RWPE1 (cell line): ENCODE measurements at regions of chr1 and their contacts with region 1.

Region 1: GRCh38 chr1:110034451-110035235 is at the start of gene STRIP1:
- DNase-seq: peak; percentile 92
- H3K27ac ChIP-seq: peak within 1 kb of the TSS; percentile 79
- CTCF ChIP-seq: no peak

Region 2: DNA sequence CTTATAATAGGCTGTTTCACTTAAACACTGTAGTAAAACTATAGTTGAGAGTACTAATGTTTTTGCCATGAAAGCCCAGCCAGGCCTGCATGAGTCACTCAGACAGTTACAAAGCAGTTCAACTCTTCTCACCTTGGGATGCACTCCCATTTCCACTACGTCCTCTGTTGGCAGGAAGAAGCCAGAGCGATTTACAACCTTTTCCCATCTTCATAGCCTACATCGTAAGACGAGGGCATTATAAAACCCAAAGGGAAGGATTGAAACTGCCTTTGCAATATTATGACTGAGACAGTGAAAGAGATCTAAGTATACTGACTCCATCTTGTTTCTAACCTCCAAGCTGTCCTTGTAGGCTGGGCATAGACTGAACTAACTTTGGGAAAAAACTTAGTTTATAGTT is 195.8 kb before region 1 on chr1:
- CTCF ChIA-PET with region 1: no interaction called
- POLR2A ChIA-PET with region 1: no interaction called
- DNase-seq: no peak
- H3K27ac ChIP-seq: no peak overlapping the region
- CTCF ChIP-seq: no peak

Region 3: DNA sequence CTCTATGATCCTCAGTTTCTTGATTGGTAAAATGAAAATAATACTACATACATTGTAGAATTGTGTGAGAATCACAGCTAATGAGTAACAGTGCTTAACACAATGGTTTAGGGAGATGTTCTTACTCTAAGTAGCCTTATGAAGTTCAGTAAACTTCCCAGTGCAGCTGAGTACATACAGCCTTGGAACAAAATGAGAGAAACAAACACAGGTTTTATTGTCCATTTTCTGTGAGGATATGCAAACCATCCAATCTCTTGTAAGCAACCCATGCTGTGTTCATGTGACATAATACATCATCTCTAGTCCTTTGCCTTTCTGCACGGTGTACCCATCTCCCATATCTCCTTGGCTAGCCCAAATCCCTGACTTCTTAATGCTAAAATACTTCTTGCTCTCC is 14.9 kb before region 1 on chr1:
- CTCF ChIA-PET with region 1: interaction called, 14 read pairs
- POLR2A ChIA-PET with region 1: no interaction called
- DNase-seq: no peak
- H3K27ac ChIP-seq: no peak overlapping the region
- CTCF ChIP-seq: no peak